BJ (cell line): ENCODE measurements at regions of chr6 and their contacts with region 1.

Region 1: DNA sequence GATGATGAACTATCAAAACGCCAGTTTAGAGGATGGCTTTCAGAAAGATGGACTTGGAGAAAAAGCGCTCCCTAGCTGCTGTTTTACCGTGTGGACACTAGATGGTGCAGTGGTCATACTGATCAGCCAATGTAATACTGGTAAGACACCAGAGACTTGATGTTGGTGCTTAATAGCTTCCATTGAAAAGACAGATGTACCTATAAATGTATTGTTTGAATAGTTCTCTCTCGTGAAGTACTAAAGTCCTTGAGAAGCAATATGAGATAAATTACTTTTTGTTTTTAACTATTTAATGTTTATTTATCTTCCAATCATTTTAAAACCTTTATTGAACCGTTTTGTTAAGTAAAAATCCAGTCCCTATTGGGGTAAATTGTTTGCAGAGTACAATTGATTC is 63.9 kb upstream of the FUCA2 start:
- DNase-seq: no peak
- H3K4me3 ChIP-seq: no peak overlapping the region
- H3K27me3 ChIP-seq: no peaks in the 10 kb centered on the region
- CTCF ChIP-seq: peak; percentile 77

Region 2: GRCh38 chr6:143940011-143940597 is 364.7 kb after region 1 on chr6:
- CTCF ChIA-PET with region 1: interaction called, 20 read pairs
- POLR2A ChIA-PET with region 1: no interaction called
- DNase-seq: no peak
- H3K4me3 ChIP-seq: no peak overlapping the region
- H3K27me3 ChIP-seq: no peaks in the 10 kb centered on the region; the same call in 1 of the 2 replicates
- CTCF ChIP-seq: peak; percentile 68

Region 3: GRCh38 chr6:144008120-144008811 is 432.8 kb after region 1 on chr6 and contains the start of gene PLAGL1:
- CTCF ChIA-PET with region 1: interaction called, 83 read pairs
- POLR2A ChIA-PET with region 1: no interaction called
- DNase-seq: no peak
- H3K4me3 ChIP-seq: peak within 1 kb of the TSS; percentile 57
- H3K27me3 ChIP-seq: no peaks in the 10 kb centered on the region
- CTCF ChIP-seq: no peak
- polyA plus RNA-seq, gene PLAGL1: 32.7 and 68.0 TPM in 2 replicates

Region 4: GRCh38 chr6:144013486-144013909 is 438.1 kb after region 1 on chr6:
- CTCF ChIA-PET with region 1: interaction called, 83 read pairs
- POLR2A ChIA-PET with region 1: interaction called, 3 read pairs
- DNase-seq: no peak
- H3K4me3 ChIP-seq: no peak overlapping the region
- H3K27me3 ChIP-seq: no peaks in the 10 kb centered on the region; the same call in 1 of the 2 replicates
- CTCF ChIP-seq: peak; percentile 84

Region 5: GRCh38 chr6:144055121-144055931 is 479.9 kb after region 1 on chr6:
- CTCF ChIA-PET with region 1: no interaction called
- POLR2A ChIA-PET with region 1: interaction called, 13 read pairs
- DNase-seq: no peak
- H3K4me3 ChIP-seq: no peak overlapping the region
- H3K27me3 ChIP-seq: peaks cover 1% of the 10 kb centered on the region; the same call in 1 of the 2 replicates
- CTCF ChIP-seq: no peak